A673 (cell line): ENCODE measurements at regions of chr21 and their contacts with region 1.

Region 1: DNA sequence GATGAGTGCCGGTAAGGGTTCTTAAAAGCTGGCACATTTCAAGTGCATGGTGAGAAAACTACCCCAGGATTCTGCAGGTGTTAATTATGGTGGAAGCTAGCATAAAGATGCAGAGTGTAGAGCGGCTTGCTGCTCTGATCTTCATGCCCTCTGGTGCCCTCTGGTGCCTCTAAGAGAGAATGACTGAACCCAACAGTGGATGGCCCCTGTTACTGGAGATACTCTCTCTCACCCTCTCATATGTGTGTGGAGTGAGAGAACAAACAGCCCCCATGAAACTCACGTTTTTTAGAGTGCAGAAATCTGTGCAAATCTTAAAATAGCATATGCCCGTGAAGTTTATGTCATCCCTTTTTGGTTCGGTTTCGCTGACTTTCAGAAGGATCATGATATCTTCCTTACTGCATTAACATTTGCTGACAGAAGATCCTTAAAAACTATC is 90.0 kb downstream of the GRIK1 start:
- DNase-seq: peak; percentile 86
- H3K4me3 ChIP-seq: no peak overlapping the region
- H3K27ac ChIP-seq: no peak overlapping the region
- H3K4me1 ChIP-seq: no peaks in the 10 kb centered on the region
- H3K27me3 ChIP-seq: no peaks in the 10 kb centered on the region
- CTCF ChIP-seq: peak; percentile 84

Region 2: DNA sequence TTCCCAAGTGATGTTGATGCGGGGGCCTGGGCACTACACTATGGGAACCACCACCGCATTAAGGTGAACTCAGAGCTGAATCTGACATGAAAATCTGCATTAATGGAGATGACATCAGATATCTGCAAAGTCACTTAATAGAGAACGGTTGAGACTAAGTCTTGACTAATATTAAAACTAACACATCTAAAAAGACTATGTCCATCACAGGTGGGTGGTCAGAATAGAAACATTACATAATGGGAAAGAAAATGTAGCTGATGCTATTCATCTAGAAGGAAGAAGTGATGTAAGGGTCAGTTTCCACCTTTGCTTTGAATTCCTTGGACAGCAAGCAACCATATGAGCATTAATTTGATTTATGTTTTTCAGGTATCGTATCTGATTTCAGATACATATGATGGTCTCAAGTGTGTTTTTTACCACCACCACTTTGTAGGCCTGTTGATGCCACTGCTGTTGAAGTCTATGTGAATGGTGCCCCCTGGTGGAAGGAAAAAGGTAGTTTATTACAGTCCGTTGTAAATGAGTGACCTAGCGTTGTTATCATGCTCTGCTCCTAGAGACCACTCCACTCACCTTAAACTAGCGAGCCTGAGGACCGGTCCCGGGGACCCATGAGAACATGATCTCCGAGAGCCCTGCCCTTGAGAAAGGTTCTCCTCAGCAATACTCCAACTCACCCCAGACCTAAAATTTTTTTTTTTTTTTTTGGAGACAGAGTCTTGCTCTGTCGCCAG is 477.5 kb before region 1 on chr21:
- CTCF ChIA-PET with region 1: interaction called, 10 read pairs
- POLR2A ChIA-PET with region 1: no interaction called
- intact Hi-C with region 1: loop called (anchors 5 kb)
- DNase-seq: peak; percentile 89
- H3K4me3 ChIP-seq: no peak overlapping the region
- H3K27ac ChIP-seq: no peak overlapping the region
- H3K4me1 ChIP-seq: no peaks in the 10 kb centered on the region
- H3K27me3 ChIP-seq: no peaks in the 10 kb centered on the region
- CTCF ChIP-seq: peak; percentile 71

Region 3: GRCh38 chr21:29477941-29478340 is 371.8 kb before region 1 on chr21:
- CTCF ChIA-PET with region 1: interaction called, 3 read pairs
- POLR2A ChIA-PET with region 1: no interaction called
- intact Hi-C with region 1: loop called (anchors 1 kb)
- DNase-seq: no peak
- H3K4me3 ChIP-seq: no peak overlapping the region
- H3K27ac ChIP-seq: no peak overlapping the region
- H3K4me1 ChIP-seq: peaks cover 9% of the 10 kb centered on the region
- H3K27me3 ChIP-seq: no peaks in the 10 kb centered on the region
- CTCF ChIP-seq: no peak

Region 4: GRCh38 chr21:29671728-29672127 is 178.0 kb before region 1 on chr21:
- CTCF ChIA-PET with region 1: interaction called, 5 read pairs
- POLR2A ChIA-PET with region 1: no interaction called
- intact Hi-C with region 1: loop called (anchors 10 kb)
- DNase-seq: peak; percentile 25
- H3K4me3 ChIP-seq: no peak overlapping the region
- H3K27ac ChIP-seq: no peak overlapping the region
- H3K4me1 ChIP-seq: peaks cover 21% of the 10 kb centered on the region
- H3K27me3 ChIP-seq: no peaks in the 10 kb centered on the region
- CTCF ChIP-seq: peak; percentile 47